ENCODE measurements at regions of chr5 and their contacts with region 1.

Region 1: GRCh38 chr5:78467752-78468357 is 107.4 kb downstream of the SCAMP1 start:
- DNase-seq: no peak
- ATAC-seq: no peak
- H3K4me3 Mint-ChIP-seq: no peak overlapping the region
- H3K27ac Mint-ChIP-seq: no peak overlapping the region
- H3K4me1 Mint-ChIP-seq: no peaks in the 10 kb centered on the region
- H3K27me3 Mint-ChIP-seq: no peaks in the 10 kb centered on the region
- CTCF ChIP-seq: peak; percentile 83

Region 2: DNA sequence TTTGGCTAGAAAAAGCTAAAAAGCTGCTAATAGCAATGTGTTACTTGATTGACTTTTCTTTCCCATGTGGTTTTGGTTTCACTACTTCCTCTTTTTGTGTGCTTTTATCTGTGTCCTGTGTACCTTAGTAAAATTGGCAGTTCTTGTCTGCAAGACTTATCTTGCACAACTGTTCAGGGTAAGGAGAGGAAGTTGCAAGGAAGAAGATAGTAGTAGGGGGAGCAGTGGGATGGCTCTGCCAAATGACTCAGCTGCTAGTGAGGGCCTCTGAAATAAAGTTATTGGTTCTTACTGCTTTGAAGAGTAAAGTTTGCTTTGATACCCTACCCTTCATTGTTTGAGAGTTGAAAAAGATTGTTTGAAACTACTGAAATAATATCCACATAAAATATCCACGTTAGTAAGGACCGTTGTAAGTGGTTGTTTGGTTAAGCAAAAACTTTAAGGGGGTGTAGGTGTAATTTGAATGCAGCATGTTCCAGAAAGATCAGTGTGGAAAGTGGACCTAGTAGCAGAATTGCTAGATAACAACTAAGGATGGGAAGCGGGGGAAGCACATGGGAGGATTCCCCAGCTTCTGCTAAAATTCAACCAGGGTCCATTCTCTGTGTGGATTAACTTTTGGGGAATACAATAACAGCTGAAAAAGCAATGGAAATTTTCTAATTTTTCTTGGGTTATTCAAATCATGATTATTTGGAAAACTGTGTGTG is 16.1 kb after region 1 on chr5:
- CTCF ChIA-PET with region 1: interaction called, 10 read pairs
- POLR2A ChIA-PET with region 1: no interaction called
- intact Hi-C with region 1: no loop called
- DNase-seq: no peak
- ATAC-seq: peak; percentile 20
- H3K4me3 Mint-ChIP-seq: no peak overlapping the region
- H3K27ac Mint-ChIP-seq: no peak overlapping the region
- H3K4me1 Mint-ChIP-seq: peaks cover 9% of the 10 kb centered on the region
- H3K27me3 Mint-ChIP-seq: no peaks in the 10 kb centered on the region
- CTCF ChIP-seq: no peak

Measured in activated CD8-positive, alpha-beta T cell treated with anti-CD3 and anti-CD28 coated beads for 36 hours (primary cell).